Panc1 (cell line): ENCODE measurements at regions of chr19 and their contacts with region 1.

Region 1: DNA sequence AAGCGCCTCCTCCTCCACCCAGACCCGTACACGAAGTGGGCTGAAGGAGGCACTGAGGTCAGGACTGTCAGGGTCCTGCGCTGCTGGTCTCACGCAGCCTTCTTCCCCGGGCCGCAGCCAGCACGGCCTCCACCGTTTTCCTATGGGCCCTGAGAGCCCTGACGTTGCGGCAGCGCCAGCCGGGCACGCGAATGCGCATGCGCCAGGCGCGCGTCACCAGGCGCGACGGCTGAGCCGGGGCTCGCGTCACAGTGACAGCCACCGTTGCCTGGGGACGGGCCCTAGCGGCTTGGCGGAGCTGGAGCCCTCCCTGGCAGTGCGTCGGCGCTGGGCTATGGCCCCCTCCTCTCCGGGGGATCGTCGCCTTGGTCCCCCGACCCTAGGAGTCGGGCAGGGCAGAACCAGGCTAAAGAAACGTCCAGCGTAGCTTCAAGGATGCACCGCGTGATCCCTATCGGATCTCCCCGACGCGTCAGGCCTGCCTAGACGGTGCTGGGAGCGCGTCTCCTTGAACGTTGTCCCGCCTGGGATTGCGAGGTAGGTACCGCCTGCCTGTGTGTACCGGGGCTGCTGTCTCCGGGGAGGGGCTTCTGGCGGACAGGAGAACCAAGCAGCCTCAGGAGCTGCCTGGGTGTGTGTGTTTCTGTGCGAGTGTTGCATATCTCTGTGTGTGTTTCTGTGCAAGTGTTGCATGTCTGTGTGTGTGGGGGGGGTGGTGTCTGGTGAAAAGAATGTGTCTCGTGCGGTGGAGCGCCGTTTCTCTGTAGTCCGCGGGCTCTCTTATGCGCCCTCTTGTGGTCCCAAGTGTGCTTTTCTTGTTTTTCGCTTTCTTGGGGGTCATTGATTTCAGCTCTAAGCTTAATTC is 43.2 kb downstream of the ZNF571 start:
- DNase-seq: no peak
- ATAC-seq: no peak
- H3K4me3 ChIP-seq: peak overlapping the region in 1 of 2 experiments; percentile 13; a peak in 1 of 4 replicates
- H3K27ac ChIP-seq: no peak overlapping the region
- H3K4me1 ChIP-seq: no peaks in the 10 kb centered on the region
- H3K27me3 ChIP-seq: no peaks in the 10 kb centered on the region
- CTCF ChIP-seq: no peak

Region 2: GRCh38 chr19:37452500-37453245 is 98.7 kb before region 1 on chr19:
- CTCF ChIA-PET with region 1: no interaction called
- POLR2A ChIA-PET with region 1: interaction called, 12 read pairs
- in situ Hi-C with region 1: no loop called
- intact Hi-C with region 1: no loop called
- DNase-seq: no peak
- ATAC-seq: no peak
- H3K4me3 ChIP-seq: no peak overlapping the region
- H3K27ac ChIP-seq: no peak overlapping the region
- H3K4me1 ChIP-seq: no peaks in the 10 kb centered on the region
- H3K27me3 ChIP-seq: no peaks in the 10 kb centered on the region
- CTCF ChIP-seq: no peak